T-cell (primary cell): ENCODE measurements at regions of chr17 and their contacts with region 1.

Region 1: DNA sequence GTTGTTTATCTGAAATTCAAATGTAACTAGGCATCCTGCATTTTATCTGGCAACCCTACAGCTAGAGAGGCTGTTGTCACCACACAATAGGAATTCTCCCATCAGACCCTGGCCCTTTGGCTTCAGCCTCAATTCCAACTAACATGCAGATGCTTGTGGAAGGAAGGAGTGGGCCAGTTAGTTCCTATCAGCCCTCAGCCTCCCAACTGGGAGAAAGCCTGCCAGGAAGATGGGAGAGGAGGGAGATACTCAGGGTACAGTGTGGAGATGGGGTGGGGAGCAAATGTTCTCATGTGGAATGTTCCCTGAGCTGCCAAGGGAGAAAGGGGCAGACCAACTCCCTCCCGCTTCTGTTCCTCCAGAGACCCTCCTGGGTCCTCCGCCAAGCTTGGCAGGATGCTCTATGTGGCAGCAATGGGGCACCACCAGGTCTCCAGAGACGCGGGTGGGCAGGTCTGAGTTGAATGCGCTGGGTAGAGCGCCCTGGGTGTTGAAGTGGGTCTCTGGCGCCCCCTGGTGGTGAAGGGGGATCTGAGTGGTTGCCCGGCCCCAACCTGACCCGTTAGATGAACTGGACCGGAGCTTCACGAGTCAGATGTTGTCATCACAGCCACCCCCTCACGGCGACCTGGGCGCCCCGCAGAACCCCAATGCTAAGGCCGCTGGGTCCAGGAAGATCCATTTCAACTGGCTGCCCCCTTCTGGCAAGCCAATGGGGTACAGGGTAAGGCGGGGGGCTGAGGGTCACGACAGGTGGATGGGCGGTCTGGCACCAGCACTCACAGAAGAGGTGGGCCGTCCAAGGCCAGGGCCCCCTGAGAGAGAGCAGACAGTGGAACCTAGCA is 15.2 kb downstream of the GALK1 start:
- DNase-seq: peak; percentile 59 to 91 (median 83)
- ATAC-seq: peak; percentile 60 to 70 (median 60)
- H3K4me3 ChIP-seq: no peak overlapping the region
- H3K4me3 Mint-ChIP-seq: no peak overlapping the region
- H3K27ac ChIP-seq: no peak overlapping the region
- H3K27ac Mint-ChIP-seq: no peak overlapping the region
- H3K4me1 ChIP-seq: peaks cover 0 to 34% of the 10 kb centered on the region in 2 experiments
- H3K4me1 Mint-ChIP-seq: peaks cover 16 to 21% (median 18%) of the 10 kb centered on the region in 3 donors
- H3K27me3 ChIP-seq: peaks cover 0 to 4% of the 10 kb centered on the region in 2 experiments
- H3K27me3 Mint-ChIP-seq: peaks cover 0 to 3% of the 10 kb centered on the region in 2 donors

Region 2: GRCh38 chr17:75619506-75620431 is 130.0 kb before region 1 on chr17:
- CTCF ChIA-PET with region 1: interaction called in 1 of 2 experiments, 10 read pairs
- POLR2A ChIA-PET with region 1: no interaction called
- DNase-seq: peak in 2 of 35 experiments; percentile 4 to 21
- ATAC-seq: peak in 1 of 4 experiments; percentile 23
- H3K4me3 ChIP-seq: no peak overlapping the region
- H3K4me3 Mint-ChIP-seq: no peak overlapping the region
- H3K27ac ChIP-seq: no peak overlapping the region
- H3K27ac Mint-ChIP-seq: no peak overlapping the region
- H3K4me1 ChIP-seq: no peaks in the 10 kb centered on the region
- H3K4me1 Mint-ChIP-seq: peaks cover 0 to 6% (median 0%) of the 10 kb centered on the region in 3 donors
- H3K27me3 ChIP-seq: peaks cover 0 to 21% of the 10 kb centered on the region in 2 experiments
- H3K27me3 Mint-ChIP-seq: no peaks in the 10 kb centered on the region

Region 3: DNA sequence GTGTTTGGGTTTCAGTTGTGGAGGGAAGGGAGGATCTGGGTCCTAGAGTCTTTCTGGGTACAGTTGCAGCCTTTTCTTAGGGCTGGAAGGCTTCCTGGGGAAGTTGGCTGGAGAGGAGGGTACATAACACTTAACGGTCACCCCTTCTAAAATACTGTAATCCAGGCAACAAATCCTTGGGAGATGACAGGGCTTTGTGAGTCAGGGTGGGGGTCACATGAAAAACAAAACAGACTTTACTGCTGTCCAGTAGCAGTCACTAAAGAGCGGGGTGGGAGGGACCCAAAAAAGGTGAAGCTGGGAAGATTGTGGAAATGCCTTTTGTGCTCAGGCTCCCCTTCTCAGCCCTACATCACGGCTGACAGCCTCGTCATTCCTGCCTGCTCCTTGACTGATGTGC is 76.3 kb before region 1 on chr17:
- CTCF ChIA-PET with region 1: interaction called, 8 to 11 read pairs
- POLR2A ChIA-PET with region 1: interaction called, 3 to 8 read pairs
- DNase-seq: no peak
- ATAC-seq: no peak
- H3K4me3 ChIP-seq: no peak overlapping the region
- H3K4me3 Mint-ChIP-seq: no peak overlapping the region
- H3K27ac ChIP-seq: no peak overlapping the region
- H3K27ac Mint-ChIP-seq: no peak overlapping the region
- H3K4me1 ChIP-seq: peaks cover 0 to under 1% of the 10 kb centered on the region in 2 experiments
- H3K4me1 Mint-ChIP-seq: peaks cover 20 to 21% (median 20%) of the 10 kb centered on the region in 3 donors
- H3K27me3 ChIP-seq: no peaks in the 10 kb centered on the region
- H3K27me3 Mint-ChIP-seq: no peaks in the 10 kb centered on the region

Region 4: DNA sequence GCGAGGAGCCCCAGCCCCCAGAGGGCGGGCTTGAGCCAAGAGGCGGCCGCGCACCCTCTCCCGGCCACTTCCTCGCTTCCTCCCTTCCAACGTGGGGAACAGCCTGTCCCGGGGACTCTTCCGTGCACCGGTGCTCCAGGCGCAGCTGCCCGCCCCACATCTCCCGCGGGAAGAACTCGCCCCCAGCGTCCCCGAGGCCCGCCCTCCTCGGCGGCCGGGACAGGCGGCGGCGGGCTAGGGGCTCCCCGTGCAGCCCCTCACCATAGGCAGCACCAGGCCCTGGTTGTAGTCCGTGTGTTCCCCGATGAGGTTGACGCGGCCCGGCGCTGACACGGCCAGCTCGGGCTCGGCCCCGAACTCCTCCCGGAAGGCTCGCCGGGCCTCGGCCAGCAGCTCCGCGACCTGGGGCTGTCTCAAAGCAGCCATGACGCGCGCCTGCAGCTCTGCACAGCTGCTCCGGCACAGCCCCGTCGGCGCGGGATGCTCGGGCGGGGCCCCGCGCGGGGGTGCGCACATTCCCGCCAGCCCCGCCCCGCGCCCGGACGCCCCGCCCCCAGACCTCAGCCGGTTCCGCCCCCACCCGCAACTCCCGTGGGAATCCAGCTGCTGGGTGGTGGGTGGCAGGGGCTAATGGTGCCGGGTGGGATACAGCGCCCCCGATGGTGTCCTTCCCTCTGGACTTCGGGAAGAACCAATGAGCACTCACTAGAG is 15.1 kb after region 1 on chr17 and contains the start of gene GALK1:
- CTCF ChIA-PET with region 1: interaction called, 3 to 15 read pairs
- POLR2A ChIA-PET with region 1: interaction called in 1 of 2 experiments, 3 read pairs
- DNase-seq: peak; percentile 38 to 84 (median 61)
- ATAC-seq: peak; percentile 76 to 96 (median 96)
- H3K4me3 ChIP-seq: peak within 1 kb of the TSS; percentile 60 to 67
- H3K4me3 Mint-ChIP-seq: peak within 1 kb of the TSS; percentile 70 to 77 (median 72)
- H3K27ac ChIP-seq: peak within 1 kb of the TSS; percentile 61
- H3K27ac Mint-ChIP-seq: peak within 1 kb of the TSS; percentile 31 to 79
- H3K4me1 ChIP-seq: peaks cover 0 to 23% of the 10 kb centered on the region in 2 experiments
- H3K4me1 Mint-ChIP-seq: peaks cover 13 to 22% (median 19%) of the 10 kb centered on the region in 3 donors
- H3K27me3 ChIP-seq: no peaks in the 10 kb centered on the region
- H3K27me3 Mint-ChIP-seq: no peaks in the 10 kb centered on the region
- total RNA-seq, gene GALK1: 8.4 to 35.7 (median 26.7) TPM